Activated T-helper 2 cell treated with anti-CD3 and anti-CD28 coated beads, Interferon-gamma antibody, Interleukin-2, Interleukin-4, amounts not matched to agents 10 μg/mL and 5 μg/mL and 100 μg/mL, durations not matched to agents 14 hours and 24 hours and 36 hours (primary cell): ENCODE measurements at regions of chr1 and their contacts with region 1.

Region 1: GRCh38 chr1:232950197-232951176 is at the start of gene NTPCR:
- DNase-seq: peak; percentile 92
- H3K4me3 Mint-ChIP-seq: peak within 1 kb of the TSS; percentile 91
- H3K27ac Mint-ChIP-seq: peak within 1 kb of the TSS; percentile 88
- H3K4me1 Mint-ChIP-seq: peaks cover 37% of the 10 kb centered on the region
- H3K27me3 Mint-ChIP-seq: no peaks in the 10 kb centered on the region
- total RNA-seq, gene NTPCR: 34.6 and 38.1 TPM in 2 replicates

Region 2: DNA sequence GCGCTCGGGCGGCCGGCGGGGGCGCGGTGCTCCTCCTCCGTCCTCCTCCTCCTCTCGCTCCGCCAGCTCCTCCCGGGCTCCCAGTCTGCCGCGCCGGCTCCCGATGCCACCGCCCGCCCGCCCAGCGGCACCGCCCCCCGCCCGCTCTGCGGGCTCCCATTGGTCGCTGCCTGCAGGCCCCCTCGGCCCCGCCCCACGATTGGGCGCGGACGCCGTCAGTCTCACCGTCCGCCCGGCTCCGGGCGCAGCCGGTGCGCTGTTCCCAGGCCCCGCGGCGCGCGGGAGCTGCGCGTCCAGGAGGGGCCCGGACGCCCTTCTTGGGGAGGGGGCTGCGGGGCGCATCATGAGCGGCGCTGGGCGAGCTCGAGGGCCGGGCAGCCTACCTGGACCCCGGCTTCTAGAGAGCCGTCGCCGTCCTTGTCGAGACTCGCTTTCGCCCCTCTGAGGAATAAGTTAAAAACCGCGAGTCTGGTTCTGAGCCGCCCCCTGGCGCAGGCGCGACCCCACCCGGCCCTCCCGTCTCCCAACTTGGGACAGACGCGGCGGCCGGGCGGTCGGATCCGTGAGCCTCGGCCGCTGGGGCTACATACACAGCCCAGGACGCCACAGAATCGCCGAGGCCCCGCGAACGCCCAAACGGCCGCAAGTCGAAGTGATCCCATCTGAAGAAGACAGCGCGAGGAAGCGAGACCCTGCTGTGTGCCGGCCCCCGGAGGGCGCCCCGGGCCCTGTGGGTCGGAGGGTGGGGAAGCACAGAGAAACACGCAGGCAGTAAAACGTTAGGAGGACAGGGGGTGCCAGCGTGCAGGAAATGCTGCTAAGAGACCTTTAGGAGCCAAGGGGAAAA is 320.2 kb before region 1 on chr1 and contains the start of gene SIPA1L2:
- intact Hi-C with region 1: loop called (anchors 2 kb)
- DNase-seq: peak; percentile 80
- H3K4me3 Mint-ChIP-seq: peak within 1 kb of the TSS; percentile 86
- H3K27ac Mint-ChIP-seq: no peak within 1 kb of the TSS
- H3K4me1 Mint-ChIP-seq: peaks cover 9% of the 10 kb centered on the region
- H3K27me3 Mint-ChIP-seq: peaks cover 57% of the 10 kb centered on the region
- total RNA-seq, gene SIPA1L2: 3.4 and 3.7 TPM in 2 replicates

Region 3: GRCh38 chr1:232805269-232806185 is 145.0 kb before region 1 on chr1 and contains the start of gene MAP10:
- intact Hi-C with region 1: loop called (anchors 1 kb)
- DNase-seq: peak; percentile 77
- H3K4me3 Mint-ChIP-seq: peak within 1 kb of the TSS; percentile 90
- H3K27ac Mint-ChIP-seq: peak within 1 kb of the TSS; percentile 79
- H3K4me1 Mint-ChIP-seq: peaks cover 31% of the 10 kb centered on the region
- H3K27me3 Mint-ChIP-seq: peaks cover 6% of the 10 kb centered on the region
- total RNA-seq, gene MAP10: 3.0 and 3.2 TPM in 2 replicates

Region 4: GRCh38 chr1:232876506-232877364 is 73.8 kb before region 1 on chr1:
- intact Hi-C with region 1: loop called (anchors 2 kb)
- DNase-seq: no peak
- H3K4me3 Mint-ChIP-seq: no peak overlapping the region
- H3K27ac Mint-ChIP-seq: peak overlapping the region; percentile 75
- H3K4me1 Mint-ChIP-seq: peaks cover 20% of the 10 kb centered on the region
- H3K27me3 Mint-ChIP-seq: no peaks in the 10 kb centered on the region

Region 5: DNA sequence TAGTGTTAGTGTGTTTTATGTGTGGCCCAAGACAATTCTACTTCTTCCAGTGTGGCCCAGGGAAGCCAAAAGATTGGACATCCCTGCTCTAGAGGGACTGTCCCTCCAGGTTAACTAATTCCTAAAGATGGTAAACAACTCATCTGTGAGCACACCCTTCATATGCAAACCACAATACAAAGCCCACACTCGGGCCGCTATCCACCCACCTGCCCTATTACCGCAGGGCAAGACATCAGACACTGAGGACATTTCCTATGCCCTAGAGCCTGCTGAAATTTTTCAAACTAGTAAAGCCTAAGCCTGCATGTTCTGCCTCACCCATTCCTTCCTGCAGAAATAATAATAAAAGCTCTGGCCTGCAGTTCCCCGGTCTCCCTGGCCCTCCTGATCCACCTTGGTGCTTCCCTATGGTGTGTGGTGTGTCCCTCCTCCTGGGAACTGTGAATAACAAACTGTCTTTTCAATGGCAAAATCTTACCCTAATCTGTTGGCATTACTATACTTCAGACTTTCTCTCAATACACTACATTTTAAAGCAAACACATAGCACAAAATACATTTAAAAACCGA is 39.4 kb before region 1 on chr1:
- intact Hi-C with region 1: loop called (anchors 5 kb)
- DNase-seq: no peak
- H3K4me3 Mint-ChIP-seq: no peak overlapping the region
- H3K27ac Mint-ChIP-seq: peak overlapping the region; percentile 0
- H3K4me1 Mint-ChIP-seq: peaks cover 47% of the 10 kb centered on the region
- H3K27me3 Mint-ChIP-seq: no peaks in the 10 kb centered on the region

Region 6: GRCh38 chr1:232923739-232924386 is 26.6 kb before region 1 on chr1:
- intact Hi-C with region 1: loop called (anchors 1 kb)
- DNase-seq: peak; percentile 62
- H3K4me3 Mint-ChIP-seq: peak overlapping the region; percentile 32
- H3K27ac Mint-ChIP-seq: peak overlapping the region; percentile 95
- H3K4me1 Mint-ChIP-seq: peaks cover 34% of the 10 kb centered on the region
- H3K27me3 Mint-ChIP-seq: no peaks in the 10 kb centered on the region